AG04449 (cell line): ENCODE measurements at regions of chr3 and their contacts with region 1.

Region 1: DNA sequence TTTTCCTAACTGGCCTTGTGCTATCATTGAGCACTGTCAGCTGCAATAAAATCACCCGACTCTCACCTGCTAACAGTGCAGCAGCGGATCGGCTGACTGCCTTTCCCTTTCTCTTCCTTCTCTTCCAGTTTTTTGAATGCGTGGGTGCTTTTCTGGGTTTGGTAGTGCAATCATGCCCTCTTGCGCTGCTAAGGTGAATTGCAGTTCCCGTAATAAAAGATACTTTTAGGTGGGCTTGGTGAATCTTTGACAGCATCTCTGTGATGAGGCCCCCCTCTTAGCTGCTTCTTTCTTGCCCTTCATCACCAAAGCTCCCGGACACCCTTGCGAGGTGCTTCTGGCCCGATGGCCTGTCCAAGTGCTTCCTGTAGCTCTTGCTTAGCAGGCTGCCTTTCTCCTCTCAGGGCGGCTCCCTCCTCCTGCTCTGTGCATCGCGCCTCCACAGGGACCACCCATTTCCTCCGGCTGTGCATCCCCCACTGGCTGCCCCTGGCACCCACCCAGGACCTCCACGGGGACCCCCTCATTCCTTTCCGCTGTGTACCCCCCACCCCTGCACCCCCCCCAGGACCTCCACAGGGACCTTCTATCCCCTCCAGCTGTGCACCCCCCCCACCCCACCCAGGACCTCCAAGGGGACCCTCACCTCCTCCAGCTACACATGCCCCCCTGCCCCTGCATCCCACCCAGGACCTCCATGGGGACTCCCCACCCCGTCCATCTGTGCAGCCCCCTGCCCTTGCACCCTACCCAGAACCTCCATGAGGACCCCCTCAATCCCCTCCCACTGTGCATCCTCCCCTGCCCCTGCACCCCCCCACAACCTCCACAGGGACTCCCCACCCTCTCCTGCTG is 50.8 kb upstream of the RPL32 start:
- DNase-seq: no peak
- H3K4me3 ChIP-seq: peak overlapping the region; percentile 25
- CTCF ChIP-seq: peak; percentile 70

Region 2: DNA sequence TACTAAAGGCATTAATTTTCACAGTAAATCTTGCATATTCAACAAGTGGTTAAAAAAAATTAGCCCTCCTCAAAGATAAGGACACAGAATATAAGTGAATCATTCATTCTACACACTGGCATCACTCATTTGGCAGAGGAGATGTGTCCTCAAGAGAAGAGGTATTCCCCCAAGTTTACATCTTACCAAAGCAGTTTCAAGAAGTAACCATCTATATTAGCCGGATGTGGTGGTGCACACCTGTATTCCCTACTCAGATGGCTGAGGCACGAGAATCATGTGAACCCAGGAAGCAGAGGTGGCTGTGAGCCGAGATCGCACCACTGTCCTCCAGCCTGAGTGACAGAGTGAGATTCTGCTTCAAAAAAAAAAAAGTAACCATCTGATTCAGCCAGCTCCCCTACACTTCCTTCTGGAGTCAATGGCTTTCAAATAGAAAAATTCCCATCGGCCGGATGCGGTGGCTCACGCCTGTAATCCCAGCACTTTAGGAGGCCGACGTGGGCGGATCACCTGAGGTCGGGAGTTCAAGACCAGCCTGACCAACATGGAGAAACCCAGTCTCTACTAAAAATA is 243.7 kb before region 1 on chr3:
- CTCF ChIA-PET with region 1: no interaction called
- POLR2A ChIA-PET with region 1: no interaction called
- DNase-seq: no peak
- H3K4me3 ChIP-seq: no peak overlapping the region
- CTCF ChIP-seq: no peak

Region 3: DNA sequence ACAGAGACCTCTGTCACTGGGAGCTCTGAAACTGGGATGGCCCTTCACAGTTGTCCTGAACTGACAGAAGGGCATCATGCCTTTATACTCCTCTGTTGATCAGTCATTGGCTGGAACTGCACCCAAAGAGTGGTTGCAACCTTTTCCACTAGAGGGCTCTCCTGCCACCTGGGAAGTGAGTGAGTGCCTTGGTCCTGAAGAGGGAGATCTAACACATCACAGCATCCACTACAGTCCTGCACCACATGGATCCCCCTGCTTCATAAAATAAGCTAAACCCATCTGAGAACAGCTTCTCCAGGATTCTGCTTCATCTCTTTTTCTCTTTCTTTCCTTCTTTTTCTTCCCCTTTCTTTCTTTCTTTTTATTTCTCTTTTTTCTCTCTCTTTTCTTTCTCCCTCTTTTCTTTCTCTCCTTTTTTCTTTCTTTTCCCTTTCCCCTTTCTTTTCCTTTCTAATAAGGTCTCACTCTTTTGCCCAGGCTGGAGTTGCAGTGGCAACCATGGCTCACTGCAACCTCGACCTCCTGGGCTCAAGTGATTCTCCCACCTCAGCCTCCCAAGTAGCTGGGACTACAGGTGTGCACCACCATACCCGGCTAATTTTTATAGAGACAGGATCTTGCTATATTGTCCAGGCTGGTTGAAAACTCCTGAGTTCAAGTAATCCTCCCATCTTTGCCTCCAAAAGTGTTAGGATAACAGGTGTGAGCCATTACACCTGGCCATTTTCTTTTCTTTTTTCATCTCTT is 185.5 kb before region 1 on chr3:
- CTCF ChIA-PET with region 1: interaction called, 12 read pairs
- POLR2A ChIA-PET with region 1: no interaction called
- DNase-seq: no peak
- H3K4me3 ChIP-seq: no peak overlapping the region
- CTCF ChIP-seq: peak; percentile 79

Region 4: DNA sequence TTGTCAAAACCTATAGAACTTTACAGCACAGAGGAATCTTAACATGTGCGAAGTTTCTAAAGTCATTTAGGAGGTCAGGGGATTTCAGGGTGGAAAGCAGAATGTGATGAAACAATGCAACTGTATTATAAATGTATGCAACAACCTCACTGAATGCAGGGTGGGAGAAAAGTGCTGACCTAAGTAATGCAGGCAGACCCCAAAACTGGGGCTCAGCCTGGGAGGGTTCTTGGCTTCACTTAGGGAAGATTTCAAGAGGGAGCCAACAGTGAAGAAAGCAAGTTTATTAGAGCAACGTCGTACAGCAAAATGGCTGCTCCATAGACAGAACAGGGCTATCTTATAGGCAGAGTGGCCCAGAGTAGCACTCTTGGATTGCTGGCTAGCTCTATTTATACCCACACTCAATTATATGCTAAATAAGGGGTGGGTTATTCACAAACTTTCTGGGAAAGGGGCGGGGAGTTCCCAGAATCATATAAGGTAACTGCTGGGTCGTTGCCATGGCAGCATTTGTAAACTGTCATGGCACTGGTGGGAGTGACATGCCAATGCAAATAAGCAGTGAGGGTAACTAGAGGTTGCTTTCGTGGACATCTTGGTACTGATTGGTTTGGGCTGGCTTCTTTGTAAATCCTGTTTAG is 109.9 kb before region 1 on chr3:
- CTCF ChIA-PET with region 1: interaction called, 10 read pairs
- POLR2A ChIA-PET with region 1: no interaction called
- DNase-seq: no peak
- H3K4me3 ChIP-seq: no peak overlapping the region
- CTCF ChIP-seq: no peak

Region 5: GRCh38 chr3:12868039-12869034 is 23.9 kb before region 1 on chr3:
- CTCF ChIA-PET with region 1: interaction called, 81 read pairs
- POLR2A ChIA-PET with region 1: no interaction called
- DNase-seq: no peak
- H3K4me3 ChIP-seq: no peak overlapping the region
- CTCF ChIP-seq: peak; percentile 94

Region 6: GRCh38 chr3:12875857-12876836 is 16.1 kb before region 1 on chr3:
- CTCF ChIA-PET with region 1: interaction called, 81 read pairs
- POLR2A ChIA-PET with region 1: no interaction called
- DNase-seq: no peak
- H3K4me3 ChIP-seq: peak overlapping the region; percentile 39
- CTCF ChIP-seq: peak; percentile 34

Region 7: GRCh38 chr3:12984023-12984823 is 92.0 kb after region 1 on chr3:
- CTCF ChIA-PET with region 1: interaction called, 30 read pairs
- POLR2A ChIA-PET with region 1: interaction called, 3 read pairs
- DNase-seq: no peak
- H3K4me3 ChIP-seq: no peak overlapping the region
- CTCF ChIP-seq: peak; percentile 77